IMR-90 (cell line): ENCODE measurements at regions of chr20 and their contacts with region 1.

Region 1: DNA sequence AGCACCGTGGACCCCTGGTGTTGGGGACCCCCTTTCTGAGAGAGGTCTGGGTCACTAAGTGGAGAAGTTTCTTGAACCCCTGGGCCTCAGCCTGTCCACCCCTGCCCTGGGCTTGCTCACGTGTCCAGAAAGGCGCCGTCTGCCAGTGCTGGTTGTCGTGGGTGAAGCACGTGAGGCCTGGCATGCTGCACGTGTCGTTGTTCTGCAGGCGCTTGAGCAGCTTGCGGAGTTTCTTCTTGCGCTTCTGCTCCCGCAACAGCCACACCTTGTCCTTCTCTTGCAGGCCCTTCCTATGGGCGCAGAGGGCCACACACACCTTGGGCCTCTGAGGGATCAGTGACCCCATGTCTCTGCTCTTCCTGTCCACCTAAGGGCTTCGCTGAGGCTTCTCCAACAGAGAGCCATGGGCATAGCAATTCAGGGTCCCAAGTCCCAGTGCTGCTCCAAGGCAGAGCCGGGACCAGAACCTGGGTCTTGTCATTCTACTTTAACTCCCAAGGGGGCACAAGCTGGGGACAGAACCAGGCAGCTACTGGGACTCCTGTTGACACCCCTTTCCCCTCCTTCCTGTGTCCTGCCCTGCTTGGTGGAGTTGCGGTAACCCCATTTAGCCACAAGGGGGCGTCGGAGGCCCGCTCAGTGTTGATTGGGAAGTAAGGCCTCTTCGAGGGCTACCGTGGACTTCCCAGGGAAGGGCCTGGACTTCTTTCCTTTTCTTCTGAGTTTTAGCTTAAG is 121.8 kb downstream of the SULF2 start:
- DNase-seq: peak; percentile 70
- ATAC-seq: peak; percentile 97
- H3K4me3 ChIP-seq: no peak overlapping the region
- H3K27ac ChIP-seq: no peak overlapping the region
- H3K4me1 ChIP-seq: no peaks in the 10 kb centered on the region
- H3K27me3 ChIP-seq: no peaks in the 10 kb centered on the region
- CTCF ChIP-seq: peak; percentile 92
- POLR2A ChIP-seq: no peak
- RAD21 ChIP-seq: peak; percentile 81

Region 2: GRCh38 chr20:47735412-47736400 is 72.2 kb after region 1 on chr20:
- CTCF ChIA-PET with region 1: no interaction called
- POLR2A ChIA-PET with region 1: no interaction called
- dilution Hi-C with region 1: no loop called
- in situ Hi-C with region 1: no loop called
- intact Hi-C with region 1: no loop called
- DNase-seq: no peak
- ATAC-seq: no peak
- H3K4me3 ChIP-seq: no peak overlapping the region
- H3K27ac ChIP-seq: no peak overlapping the region
- H3K4me1 ChIP-seq: no peaks in the 10 kb centered on the region
- H3K27me3 ChIP-seq: peaks cover 2% of the 10 kb centered on the region
- CTCF ChIP-seq: no peak
- POLR2A ChIP-seq: no peak
- RAD21 ChIP-seq: no peak

Region 3: DNA sequence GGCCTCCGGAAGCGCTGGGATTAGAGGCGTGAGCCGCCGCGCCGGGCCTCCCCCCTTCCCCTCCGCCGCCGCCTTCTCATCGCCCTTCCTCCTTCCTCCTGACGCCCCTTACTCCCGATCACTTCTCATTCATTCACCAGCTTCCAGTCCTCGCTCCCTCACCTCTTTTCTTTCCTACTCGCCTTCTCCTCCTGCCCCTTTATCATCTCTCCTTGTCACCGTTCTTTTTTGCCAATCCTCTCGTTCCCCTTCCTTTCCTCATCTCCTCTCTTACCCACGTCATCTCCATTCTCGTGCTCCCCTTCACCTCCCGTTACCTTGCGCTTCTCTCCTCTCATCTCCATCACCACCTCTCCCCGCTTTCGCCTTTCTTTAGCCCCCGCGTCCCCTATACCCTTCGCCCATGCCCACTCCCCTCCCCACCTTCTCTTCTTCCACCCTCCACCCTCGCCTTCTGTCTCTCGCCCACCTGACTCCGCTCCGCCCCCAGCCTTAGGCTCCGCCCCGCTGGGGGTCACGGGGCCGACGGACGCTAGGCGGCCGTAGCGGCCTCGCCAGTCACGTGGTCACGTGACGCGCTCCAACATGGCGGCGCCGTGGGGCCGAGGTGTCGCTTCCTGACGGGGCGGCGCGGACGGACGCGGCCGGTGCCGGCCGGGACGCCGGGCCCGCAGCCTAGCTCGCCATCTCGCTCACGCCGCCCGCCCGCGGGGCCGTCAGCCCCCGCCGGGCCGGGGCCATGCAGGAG is 1257.8 kb after region 1 on chr20 and contains the start of gene ARFGEF2:
- CTCF ChIA-PET with region 1: no interaction called
- POLR2A ChIA-PET with region 1: no interaction called
- dilution Hi-C with region 1: no loop called
- in situ Hi-C with region 1: loop called (anchors 25 kb)
- intact Hi-C with region 1: no loop called
- DNase-seq: peak; percentile 87
- ATAC-seq: peak; percentile 97
- H3K4me3 ChIP-seq: peak within 1 kb of the TSS; percentile 82
- H3K27ac ChIP-seq: peak within 1 kb of the TSS; percentile 77
- H3K4me1 ChIP-seq: peaks cover 2% of the 10 kb centered on the region; the same call in 1 of the 2 replicates
- H3K27me3 ChIP-seq: no peaks in the 10 kb centered on the region; the same call in 1 of the 2 replicates
- CTCF ChIP-seq: 0 out of 2 replicates have a peak, but pooled peaks have one; percentile 7
- POLR2A ChIP-seq: peak; percentile 93
- RAD21 ChIP-seq: no peak
- total RNA-seq, gene ARFGEF2: 39.1 and 40.5 TPM in 2 replicates